Activated naive CD4-positive, alpha-beta T cell treated with anti-CD3 and anti-CD28 coated beads for 36 hours (primary cell): ENCODE measurements at regions of chr19 and their contacts with region 1.

Region 1: DNA sequence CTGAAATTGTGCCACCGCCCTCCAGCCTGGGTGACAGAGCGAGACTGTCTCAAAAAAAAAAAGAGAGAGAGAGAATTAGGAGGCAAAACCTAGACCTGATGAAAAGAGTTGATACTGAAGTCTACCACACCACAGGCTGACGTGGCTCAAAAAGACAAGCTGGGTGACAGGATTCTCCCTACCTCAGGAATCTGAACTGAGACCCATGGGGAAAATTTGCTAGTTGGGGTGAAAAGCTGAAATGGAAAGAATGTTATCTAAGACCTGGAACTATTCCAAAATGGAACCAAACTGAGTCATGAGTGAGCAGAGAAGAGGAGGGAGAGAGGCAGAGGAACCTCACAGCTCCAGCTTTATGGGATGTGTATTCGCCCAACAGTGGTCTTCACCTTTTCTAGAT is 11.7 kb downstream of the SMG9 start:
- DNase-seq: no peak
- H3K4me3 Mint-ChIP-seq: no peak overlapping the region
- H3K27ac Mint-ChIP-seq: no peak overlapping the region
- H3K4me1 Mint-ChIP-seq: peaks cover 12% of the 10 kb centered on the region
- H3K27me3 Mint-ChIP-seq: no peaks in the 10 kb centered on the region

Region 2: GRCh38 chr19:43723588-43723987 is 19.4 kb before region 1 on chr19:
- CTCF ChIA-PET with region 1: interaction called, 14 read pairs
- intact Hi-C with region 1: no loop called
- DNase-seq: no peak
- H3K4me3 Mint-ChIP-seq: no peak overlapping the region
- H3K27ac Mint-ChIP-seq: no peak overlapping the region
- H3K4me1 Mint-ChIP-seq: no peaks in the 10 kb centered on the region
- H3K27me3 Mint-ChIP-seq: no peaks in the 10 kb centered on the region

Region 3: DNA sequence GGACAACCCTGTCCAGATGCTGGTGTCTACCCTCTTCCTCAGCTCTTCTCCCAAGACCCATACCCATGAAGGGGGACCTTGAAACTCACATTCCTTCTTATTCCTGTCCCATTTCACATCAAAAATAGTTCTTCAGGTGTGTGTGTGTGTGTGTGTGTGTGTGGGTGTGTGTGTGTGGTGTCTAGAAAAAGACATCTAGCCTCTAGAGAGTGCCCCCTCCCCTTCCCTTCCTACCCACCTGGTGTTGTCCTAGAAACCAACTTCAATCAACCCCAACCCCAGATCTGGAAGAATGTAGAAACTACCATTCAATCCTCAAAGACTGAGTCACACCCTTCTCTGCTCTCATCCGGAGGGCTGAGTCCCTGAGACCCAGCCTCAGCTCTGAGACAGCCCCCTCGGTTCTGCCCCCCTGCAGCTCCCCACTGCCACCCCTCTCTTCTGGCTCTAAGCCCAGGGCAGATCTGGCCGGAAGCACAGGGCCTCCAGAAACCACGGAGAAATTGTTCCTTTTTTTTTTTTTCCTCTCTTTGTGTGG is 34.2 kb after region 1 on chr19:
- CTCF ChIA-PET with region 1: interaction called, 13 read pairs
- intact Hi-C with region 1: loop called (anchors 1 kb)
- DNase-seq: peak; percentile 64
- H3K4me3 Mint-ChIP-seq: peak overlapping the region; percentile 76
- H3K27ac Mint-ChIP-seq: peak overlapping the region; percentile 94
- H3K4me1 Mint-ChIP-seq: peaks cover 61% of the 10 kb centered on the region
- H3K27me3 Mint-ChIP-seq: no peaks in the 10 kb centered on the region

Region 4: GRCh38 chr19:43809762-43810696 is 67.0 kb after region 1 on chr19:
- CTCF ChIA-PET with region 1: interaction called, 12 read pairs
- intact Hi-C with region 1: loop called (anchors 1 kb)
- DNase-seq: no peak
- H3K4me3 Mint-ChIP-seq: no peak overlapping the region
- H3K27ac Mint-ChIP-seq: no peak overlapping the region
- H3K4me1 Mint-ChIP-seq: peaks cover 2% of the 10 kb centered on the region
- H3K27me3 Mint-ChIP-seq: peaks cover 3% of the 10 kb centered on the region

Region 5: GRCh38 chr19:44869733-44870470 is 1126.9 kb after region 1 on chr19:
- CTCF ChIA-PET with region 1: no interaction called
- intact Hi-C with region 1: no loop called
- DNase-seq: no peak
- H3K4me3 Mint-ChIP-seq: no peak overlapping the region
- H3K27ac Mint-ChIP-seq: no peak overlapping the region
- H3K4me1 Mint-ChIP-seq: no peaks in the 10 kb centered on the region
- H3K27me3 Mint-ChIP-seq: no peaks in the 10 kb centered on the region